ENCODE measurements at regions of chr5 and their contacts with region 1.

Region 1: GRCh38 chr5:135565725-135566421 is 12.9 kb downstream of the CXCL14 start:
- DNase-seq: peak; percentile 70
- H3K4me3 Mint-ChIP-seq: no peak overlapping the region
- H3K27ac Mint-ChIP-seq: no peak overlapping the region
- H3K4me1 Mint-ChIP-seq: peaks cover 8% of the 10 kb centered on the region
- H3K27me3 Mint-ChIP-seq: peaks cover under 1% of the 10 kb centered on the region

Region 2: DNA sequence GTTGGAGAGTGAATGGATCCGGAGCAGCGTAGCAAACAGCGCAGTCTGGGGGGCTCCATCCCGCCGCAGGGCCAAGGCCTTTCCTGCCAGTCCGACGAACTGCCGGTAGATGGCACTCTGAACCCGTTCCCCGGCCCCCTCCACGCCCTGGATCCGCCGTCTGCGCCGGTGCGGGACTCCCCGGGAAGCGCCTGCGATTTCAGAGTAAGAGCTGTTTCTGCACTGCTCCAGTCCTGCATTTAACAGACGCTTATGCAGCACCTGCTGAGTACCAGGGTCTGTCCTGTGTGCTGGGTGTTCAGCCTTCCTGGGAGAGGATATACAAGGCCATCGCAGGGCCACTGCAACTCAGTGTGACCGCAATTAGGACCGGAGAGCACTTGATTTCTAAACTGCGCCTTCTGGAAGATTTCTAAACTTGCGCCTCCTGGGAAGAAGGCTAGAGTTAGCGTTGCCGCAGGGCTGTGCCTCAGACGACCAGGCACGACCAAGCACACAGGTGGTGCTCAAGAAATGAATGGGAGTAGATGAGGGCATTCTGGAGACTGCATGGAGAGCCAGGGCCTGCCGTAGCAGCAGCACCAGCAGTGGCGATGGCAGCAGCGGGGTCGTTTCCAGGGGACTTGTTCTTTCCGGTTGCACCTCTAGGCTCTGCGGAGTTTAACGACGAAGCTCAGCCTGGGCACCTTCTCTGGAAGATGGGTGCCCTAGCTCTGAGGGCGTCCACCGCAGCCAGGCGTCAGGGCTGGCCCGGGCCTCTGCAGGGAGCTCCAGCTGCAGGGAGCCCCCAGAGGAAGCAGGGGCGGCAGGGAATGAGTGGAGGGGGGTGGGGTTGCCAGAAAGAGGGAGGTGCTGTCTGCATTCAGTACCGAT is 99.5 kb before region 1 on chr5:
- CTCF ChIA-PET with region 1: interaction called, 25 read pairs
- POLR2A ChIA-PET with region 1: no interaction called
- DNase-seq: peak; percentile 64
- H3K4me3 Mint-ChIP-seq: no peak overlapping the region
- H3K27ac Mint-ChIP-seq: no peak overlapping the region
- H3K4me1 Mint-ChIP-seq: peaks cover 3% of the 10 kb centered on the region
- H3K27me3 Mint-ChIP-seq: peaks cover 33% of the 10 kb centered on the region

Region 3: GRCh38 chr5:135591277-135591676 is 25.4 kb after region 1 on chr5:
- CTCF ChIA-PET with region 1: no interaction called
- POLR2A ChIA-PET with region 1: no interaction called
- DNase-seq: no peak
- H3K4me3 Mint-ChIP-seq: no peak overlapping the region
- H3K27ac Mint-ChIP-seq: no peak overlapping the region
- H3K4me1 Mint-ChIP-seq: no peaks in the 10 kb centered on the region
- H3K27me3 Mint-ChIP-seq: no peaks in the 10 kb centered on the region